ENCODE measurements at regions of chr12 and their contacts with region 1.

Region 1: GRCh38 chr12:3135522-3136461 is 58.6 kb downstream of the TSPAN9 start:
- DNase-seq: peak; percentile 58 to 63
- H3K4me3 ChIP-seq: no peak overlapping the region
- H3K27ac ChIP-seq: no peak overlapping the region
- H3K4me1 ChIP-seq: peaks cover 2 to 32% (median 20%) of the 10 kb centered on the region in 4 experiments
- H3K27me3 ChIP-seq: no peaks in the 10 kb centered on the region
- CTCF ChIP-seq: peak in 2 of 3 experiments; percentile 88 to 93; a peak in 3 of 4 replicates
- EP300 ChIP-seq: no peak
- POLR2A ChIP-seq: no peak
- RAD21 ChIP-seq: peak; percentile 97 to 99

Region 2: DNA sequence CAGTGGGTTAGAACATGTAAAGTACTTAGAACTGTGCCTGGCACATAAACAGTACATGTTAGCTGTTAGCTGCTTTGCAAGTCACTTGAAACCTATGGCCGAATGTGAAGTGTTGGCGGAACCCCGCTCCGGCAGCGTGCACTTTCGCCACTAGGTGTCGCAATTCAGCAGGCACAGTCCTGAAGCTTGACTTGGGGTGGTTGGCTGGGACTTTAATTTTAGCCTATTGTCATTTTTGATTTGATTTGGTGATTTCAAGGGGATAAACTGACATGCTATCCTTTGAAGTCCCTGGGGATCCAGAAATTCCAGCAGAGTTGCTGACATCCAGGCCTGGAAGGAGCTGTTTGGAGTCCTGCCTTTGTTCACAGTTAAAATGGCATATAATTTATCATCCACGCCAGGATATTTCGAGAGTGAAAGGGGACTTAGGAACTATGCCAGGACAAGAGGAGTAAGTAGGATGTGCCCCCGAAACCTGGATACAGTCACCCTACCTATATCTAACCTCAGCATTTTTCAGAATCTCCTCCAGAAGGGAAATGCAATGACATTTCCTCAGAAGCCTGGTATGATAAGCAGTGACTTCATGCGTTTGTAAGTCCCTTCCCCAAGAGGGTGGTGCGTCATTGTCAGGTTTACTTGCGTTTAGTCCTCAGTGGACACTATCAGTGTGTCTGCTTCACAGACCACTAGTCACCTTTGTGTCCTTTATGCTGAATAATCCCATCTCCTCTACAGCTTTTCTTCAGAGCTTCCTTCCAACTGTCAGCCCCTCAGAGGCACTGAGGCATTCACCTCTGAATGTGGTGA is 62.1 kb before region 1 on chr12:
- CTCF ChIA-PET with region 1: interaction called, 78 read pairs
- POLR2A ChIA-PET with region 1: no interaction called
- DNase-seq: peak; percentile 79 to 96
- H3K4me3 ChIP-seq: no peak overlapping the region
- H3K27ac ChIP-seq: no peak overlapping the region
- H3K4me1 ChIP-seq: peaks cover 0 to 12% (median 3%) of the 10 kb centered on the region in 4 experiments; a peak in 3 of 7 replicates
- H3K27me3 ChIP-seq: peaks cover 0 to 18% (median 8%) of the 10 kb centered on the region in 4 experiments; a peak in 3 of 7 replicates
- CTCF ChIP-seq: peak; percentile 95 to 99 (median 99)
- EP300 ChIP-seq: no peak
- POLR2A ChIP-seq: no peak
- RAD21 ChIP-seq: peak; percentile 90 to 95

Region 3: DNA sequence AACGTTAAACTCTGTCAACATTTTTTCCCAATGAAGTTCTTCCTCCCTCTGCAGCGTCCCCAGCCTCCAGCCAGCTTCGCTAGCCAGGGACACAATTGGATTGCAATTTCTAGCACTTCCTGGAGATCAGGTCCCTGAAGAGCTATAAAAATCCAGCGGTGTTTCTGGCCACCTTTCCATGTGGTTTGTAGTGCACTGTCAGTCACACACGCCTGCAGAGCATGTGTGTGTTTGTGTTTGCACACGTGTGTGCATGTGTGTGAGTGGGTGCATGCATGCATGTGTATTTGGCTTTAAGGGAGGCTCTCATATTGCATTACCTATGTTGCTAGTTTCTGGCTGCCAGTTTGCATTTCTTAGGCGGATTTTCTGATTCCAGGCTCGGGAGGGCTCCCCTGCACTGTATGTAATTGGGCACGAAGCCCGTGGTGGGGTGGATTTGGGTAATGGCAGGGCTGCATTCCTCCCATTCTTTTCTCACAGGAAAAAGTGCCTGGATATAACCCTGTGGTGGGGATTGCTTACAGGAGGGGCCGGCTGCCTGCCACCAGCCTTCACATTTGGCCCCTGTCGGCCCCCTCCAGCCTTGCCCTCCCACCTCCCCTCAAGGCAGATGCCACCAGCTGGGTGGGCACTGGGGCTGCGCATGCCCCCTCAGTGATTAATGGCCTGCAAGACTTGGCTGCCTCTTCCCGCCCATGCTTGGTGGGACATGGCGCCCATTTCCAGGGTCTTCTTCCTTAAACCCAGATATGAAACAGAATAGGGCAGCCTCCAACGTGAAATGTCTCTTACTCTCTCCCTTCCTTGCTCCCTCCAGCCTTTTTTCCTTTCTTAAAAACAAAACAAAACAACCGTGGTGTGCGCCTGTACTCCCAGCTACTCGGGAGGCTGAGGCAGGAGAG is 15.4 kb after region 1 on chr12:
- CTCF ChIA-PET with region 1: interaction called, 92 read pairs
- POLR2A ChIA-PET with region 1: interaction called, 4 read pairs
- DNase-seq: no peak
- H3K4me3 ChIP-seq: no peak overlapping the region
- H3K27ac ChIP-seq: no peak overlapping the region
- H3K4me1 ChIP-seq: peaks cover 8 to 31% (median 27%) of the 10 kb centered on the region in 4 experiments
- H3K27me3 ChIP-seq: no peaks in the 10 kb centered on the region; a peak in 1 of 7 replicates
- CTCF ChIP-seq: no peak
- EP300 ChIP-seq: no peak
- POLR2A ChIP-seq: no peak
- RAD21 ChIP-seq: no peak; a peak in 1 of 4 replicates

Region 4: DNA sequence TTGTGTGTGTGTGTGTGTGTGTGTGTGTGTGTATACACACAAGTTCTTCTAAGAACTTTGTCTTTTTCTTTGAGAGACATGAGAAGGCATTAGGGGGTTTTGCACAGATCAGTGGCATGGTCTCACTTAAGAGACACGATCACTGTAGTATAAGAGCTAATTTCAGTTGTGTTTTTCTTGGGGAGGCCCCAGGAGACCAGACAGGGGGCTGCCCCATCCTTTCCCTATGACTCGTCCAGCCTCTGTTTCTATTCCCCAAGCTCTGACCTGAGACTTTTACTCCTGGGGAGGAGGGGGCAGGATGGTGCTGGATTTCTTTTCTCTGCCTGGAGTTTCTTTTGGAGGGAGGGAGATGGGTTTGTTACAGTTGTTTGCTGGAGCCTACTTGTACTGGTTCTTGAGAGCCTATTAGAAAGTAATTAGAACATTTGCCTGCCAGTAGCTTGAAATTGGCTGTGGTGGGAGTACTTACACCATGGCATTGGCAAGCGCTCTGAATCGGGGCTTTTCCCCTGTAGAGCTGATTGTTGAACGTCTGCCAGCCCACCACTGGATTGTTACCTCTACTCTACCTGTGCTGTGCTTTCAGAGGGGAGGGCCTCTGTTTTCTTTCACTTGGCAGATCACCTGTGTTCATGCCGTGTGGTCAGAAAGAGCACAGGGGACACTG is 50.9 kb after region 1 on chr12:
- CTCF ChIA-PET with region 1: interaction called, 26 read pairs
- POLR2A ChIA-PET with region 1: no interaction called
- DNase-seq: no peak
- H3K4me3 ChIP-seq: no peak overlapping the region
- H3K27ac ChIP-seq: no peak overlapping the region
- H3K4me1 ChIP-seq: peaks cover 0 to 5% (median 0%) of the 10 kb centered on the region in 4 experiments; a peak in 2 of 7 replicates
- H3K27me3 ChIP-seq: no peaks in the 10 kb centered on the region
- CTCF ChIP-seq: no peak
- EP300 ChIP-seq: no peak
- POLR2A ChIP-seq: no peak
- RAD21 ChIP-seq: no peak

Region 5: GRCh38 chr12:3288690-3289089 is 152.9 kb after region 1 on chr12:
- CTCF ChIA-PET with region 1: interaction called, 10 read pairs
- POLR2A ChIA-PET with region 1: no interaction called
- DNase-seq: no peak
- H3K4me3 ChIP-seq: no peak overlapping the region
- H3K27ac ChIP-seq: no peak overlapping the region
- H3K4me1 ChIP-seq: peaks cover 0 to 5% (median 2%) of the 10 kb centered on the region in 4 experiments; a peak in 4 of 7 replicates
- H3K27me3 ChIP-seq: no peaks in the 10 kb centered on the region
- CTCF ChIP-seq: no peak
- EP300 ChIP-seq: no peak
- POLR2A ChIP-seq: no peak
- RAD21 ChIP-seq: no peak